ENCODE measurements at regions of chr3 and their contacts with region 1.

Region 1: DNA sequence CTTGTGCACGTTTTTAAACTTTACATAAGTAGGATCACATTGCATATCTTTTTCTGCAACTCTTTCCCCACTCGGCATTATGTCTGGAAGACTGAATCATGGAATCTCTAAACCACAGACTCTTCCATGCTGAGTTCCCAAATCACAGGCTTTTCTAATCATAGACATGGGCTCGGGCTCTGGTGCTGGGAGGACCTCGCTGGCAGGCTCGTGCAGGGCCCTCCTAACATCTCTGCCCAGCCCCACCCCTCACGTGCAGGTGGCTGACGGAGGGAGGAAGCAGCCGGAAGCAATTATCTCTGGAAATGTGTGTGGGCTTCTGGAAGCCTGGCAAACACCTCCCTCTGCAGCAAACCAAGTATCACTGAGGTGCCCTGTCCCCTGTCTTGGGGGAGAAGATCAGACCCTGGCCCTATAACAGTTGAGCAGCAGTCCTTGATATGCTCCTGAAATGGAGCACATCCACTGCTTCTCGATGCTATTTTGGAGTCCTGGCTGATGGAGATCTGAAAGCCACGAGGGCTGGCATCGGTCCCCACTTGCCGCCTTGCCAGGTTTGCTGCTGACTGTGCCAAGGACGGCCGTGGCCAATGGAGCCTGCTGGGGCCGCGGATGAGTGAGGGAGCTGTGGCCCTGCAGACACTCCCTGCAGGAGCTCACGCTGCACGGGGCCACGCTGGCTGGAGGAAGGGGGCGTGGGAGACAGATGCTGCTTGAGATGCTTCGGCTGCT is 4.4 kb upstream of the IQSEC1 start:
- DNase-seq: no peak
- ATAC-seq: no peak
- H3K4me3 ChIP-seq: no peak overlapping the region
- H3K27ac ChIP-seq: no peak overlapping the region
- H3K4me1 ChIP-seq: peaks cover 8 to 29% of the 10 kb centered on the region in 2 experiments; a peak in 4 of 5 replicates
- H3K27me3 ChIP-seq: peaks cover 68 to 90% of the 10 kb centered on the region in 2 experiments
- CTCF ChIP-seq: no peak
- EP300 ChIP-seq: no peak
- POLR2A ChIP-seq: no peak
- RAD21 ChIP-seq: no peak

Region 2: GRCh38 chr3:12930964-12931905 is 146.4 kb before region 1 on chr3:
- CTCF ChIA-PET with region 1: no interaction called
- POLR2A ChIA-PET with region 1: no interaction called
- in situ Hi-C with region 1: no loop called
- intact Hi-C with region 1: no loop called
- DNase-seq: peak in 3 of 4 experiments; percentile 36 to 63 (median 53)
- ATAC-seq: peak; percentile 74
- H3K4me3 ChIP-seq: no peak overlapping the region
- H3K27ac ChIP-seq: no peak overlapping the region
- H3K4me1 ChIP-seq: peaks cover 0 to 42% of the 10 kb centered on the region in 2 experiments; a peak in 3 of 5 replicates
- H3K27me3 ChIP-seq: no peaks in the 10 kb centered on the region
- CTCF ChIP-seq: peak; percentile 39 to 49 (median 41)
- EP300 ChIP-seq: no peak
- POLR2A ChIP-seq: no peak
- RAD21 ChIP-seq: peak in 1 of 2 experiments; percentile 50; a peak in 2 of 4 replicates

Region 3: GRCh38 chr3:13025094-13025493 is 52.5 kb before region 1 on chr3:
- CTCF ChIA-PET with region 1: interaction called, 3 read pairs
- POLR2A ChIA-PET with region 1: interaction called, 5 read pairs
- in situ Hi-C with region 1: no loop called
- intact Hi-C with region 1: loop called (anchors 5 kb)
- DNase-seq: no peak
- ATAC-seq: peak; percentile 14; the same call in 1 of the 3 replicates
- H3K4me3 ChIP-seq: no peak overlapping the region
- H3K27ac ChIP-seq: no peak overlapping the region
- H3K4me1 ChIP-seq: peaks cover 0 to 29% of the 10 kb centered on the region in 2 experiments; a peak in 3 of 5 replicates
- H3K27me3 ChIP-seq: peaks cover 11 to 30% of the 10 kb centered on the region in 2 experiments; a peak in 4 of 5 replicates
- CTCF ChIP-seq: no peak
- EP300 ChIP-seq: no peak
- POLR2A ChIP-seq: no peak
- RAD21 ChIP-seq: no peak

Region 4: GRCh38 chr3:13186435-13186815 is 108.8 kb after region 1 on chr3:
- CTCF ChIA-PET with region 1: no interaction called
- POLR2A ChIA-PET with region 1: no interaction called
- in situ Hi-C with region 1: no loop called
- intact Hi-C with region 1: no loop called
- DNase-seq: no peak
- ATAC-seq: no peak
- H3K4me3 ChIP-seq: no peak overlapping the region
- H3K27ac ChIP-seq: no peak overlapping the region
- H3K4me1 ChIP-seq: peaks cover 0 to 7% of the 10 kb centered on the region in 2 experiments; a peak in 2 of 5 replicates
- H3K27me3 ChIP-seq: peaks cover 38 to 56% of the 10 kb centered on the region in 2 experiments
- CTCF ChIP-seq: no peak
- EP300 ChIP-seq: no peak
- POLR2A ChIP-seq: no peak
- RAD21 ChIP-seq: no peak

Region 5: DNA sequence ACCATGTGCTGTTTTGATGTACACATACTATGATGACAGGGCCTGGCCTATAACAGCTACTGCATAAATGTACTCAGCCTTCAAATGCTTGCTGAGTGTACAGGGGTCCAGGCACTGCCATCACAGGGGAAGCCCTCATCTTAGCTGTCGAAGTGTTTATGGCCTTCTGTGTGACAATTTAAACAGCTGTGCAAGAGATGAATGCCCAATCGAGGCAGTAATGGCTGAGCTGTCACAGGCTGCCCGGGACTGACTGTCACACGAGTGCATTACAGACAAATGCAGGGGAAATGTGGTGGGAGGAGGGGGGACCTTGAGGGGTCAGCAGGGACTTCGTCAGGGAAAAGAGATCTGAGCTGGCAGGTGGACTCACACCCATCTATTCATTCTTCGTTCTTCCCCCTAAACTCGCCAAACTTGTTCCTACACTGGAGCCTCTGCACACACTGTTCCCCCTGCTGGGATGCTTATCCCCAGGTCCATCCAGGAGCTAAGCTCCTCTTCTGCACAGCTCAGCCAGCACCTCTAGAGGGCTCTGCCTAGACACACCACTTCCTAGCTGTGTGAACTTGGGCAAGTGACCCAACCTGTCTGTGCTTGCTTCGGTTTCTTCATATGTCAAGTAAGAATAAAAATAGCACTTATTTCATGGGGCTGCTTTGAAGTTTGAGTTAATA is 151.8 kb after region 1 on chr3:
- CTCF ChIA-PET with region 1: no interaction called
- POLR2A ChIA-PET with region 1: no interaction called
- in situ Hi-C with region 1: no loop called
- intact Hi-C with region 1: no loop called
- DNase-seq: peak; percentile 67 to 74 (median 72)
- ATAC-seq: peak; percentile 98
- H3K4me3 ChIP-seq: no peak overlapping the region
- H3K27ac ChIP-seq: no peak overlapping the region
- H3K4me1 ChIP-seq: peaks cover 4 to 11% of the 10 kb centered on the region in 2 experiments; a peak in 3 of 5 replicates
- H3K27me3 ChIP-seq: peaks cover 11 to 51% of the 10 kb centered on the region in 2 experiments; a peak in 4 of 5 replicates
- CTCF ChIP-seq: peak; percentile 77 to 78 (median 78)
- EP300 ChIP-seq: no peak
- POLR2A ChIP-seq: no peak
- RAD21 ChIP-seq: peak; percentile 23 to 70; a peak in 3 of 4 replicates

Region 6: GRCh38 chr3:13254028-13254951 is 176.7 kb after region 1 on chr3:
- CTCF ChIA-PET with region 1: no interaction called
- POLR2A ChIA-PET with region 1: no interaction called
- in situ Hi-C with region 1: no loop called
- intact Hi-C with region 1: no loop called
- DNase-seq: no peak
- ATAC-seq: no peak
- H3K4me3 ChIP-seq: no peak overlapping the region
- H3K27ac ChIP-seq: no peak overlapping the region
- H3K4me1 ChIP-seq: peaks cover 4 to 5% of the 10 kb centered on the region in 2 experiments; a peak in 2 of 5 replicates
- H3K27me3 ChIP-seq: peaks cover 70 to 95% of the 10 kb centered on the region in 2 experiments
- CTCF ChIP-seq: no peak
- EP300 ChIP-seq: no peak
- POLR2A ChIP-seq: no peak
- RAD21 ChIP-seq: no peak

Measured in K562 (cell line).